Naive thymus-derived CD4-positive, alpha-beta T cell (primary cell): ENCODE measurements at regions of chr14 and their contacts with region 1.

Region 1: GRCh38 chr14:63867933-63868921 is 15.4 kb downstream of the SYNE2 start:
- DNase-seq: peak in 6 of 9 donors; percentile 15 to 44 (median 28)
- ATAC-seq: no peak
- H3K4me3 ChIP-seq: no peak overlapping the region
- H3K4me3 Mint-ChIP-seq: peak overlapping the region; percentile 46 to 84 (median 75)
- H3K27ac ChIP-seq: peak overlapping the region; percentile 36
- H3K27ac Mint-ChIP-seq: peak overlapping the region; percentile 84 to 98 (median 92)
- H3K4me1 ChIP-seq: peaks cover 36 to 60% of the 10 kb centered on the region in 2 donors
- H3K4me1 Mint-ChIP-seq: peaks cover 37 to 78% (median 64%) of the 10 kb centered on the region in 7 donors
- H3K27me3 ChIP-seq: no peaks in the 10 kb centered on the region
- H3K27me3 Mint-ChIP-seq: no peaks in the 10 kb centered on the region

Region 2: DNA sequence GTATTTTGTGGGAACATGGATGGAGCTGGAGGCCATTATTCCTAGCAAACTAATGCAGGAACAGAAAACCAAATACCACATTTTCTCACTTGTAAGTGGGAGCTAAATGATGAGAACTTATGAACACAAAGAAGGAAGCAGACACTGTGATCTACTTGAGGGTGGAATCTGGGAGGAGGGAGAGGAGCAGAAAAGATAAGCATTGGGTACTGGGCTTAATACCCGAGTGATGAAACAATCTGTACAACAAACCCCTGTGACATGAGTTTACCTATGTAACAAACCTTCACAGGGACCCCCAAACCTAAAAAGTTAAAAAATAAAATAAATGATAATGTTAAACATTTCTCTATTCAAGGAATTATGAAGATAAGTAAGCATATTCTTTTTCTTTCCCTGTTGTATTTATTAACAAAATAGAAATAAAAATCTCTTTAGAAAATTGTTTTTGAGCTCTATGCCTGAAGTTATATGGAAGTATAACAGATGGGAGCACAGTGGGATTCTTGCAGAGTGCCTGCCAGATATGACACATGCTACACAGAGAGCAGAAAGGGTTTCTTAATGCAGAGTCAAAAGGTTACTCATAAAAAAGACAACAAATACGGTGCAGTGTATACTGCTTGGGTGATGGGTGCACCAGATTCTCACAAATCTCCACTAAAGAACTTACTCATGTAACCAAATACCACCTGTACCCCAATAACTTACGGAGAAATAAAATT is 67.4 kb before region 1 on chr14:
- CTCF ChIA-PET with region 1: no interaction called
- POLR2A ChIA-PET with region 1: no interaction called
- intact Hi-C with region 1: no loop called
- DNase-seq: no peak
- ATAC-seq: no peak
- H3K4me3 ChIP-seq: no peak overlapping the region
- H3K4me3 Mint-ChIP-seq: no peak overlapping the region
- H3K27ac ChIP-seq: no peak overlapping the region
- H3K27ac Mint-ChIP-seq: peak overlapping the region in 1 of 9 donors; percentile 46
- H3K4me1 ChIP-seq: no peaks in the 10 kb centered on the region
- H3K4me1 Mint-ChIP-seq: peaks cover 3 to 12% (median 4%) of the 10 kb centered on the region in 7 donors
- H3K27me3 ChIP-seq: no peaks in the 10 kb centered on the region
- H3K27me3 Mint-ChIP-seq: peaks cover 0 to 17% (median 0%) of the 10 kb centered on the region in 5 donors

Region 3: DNA sequence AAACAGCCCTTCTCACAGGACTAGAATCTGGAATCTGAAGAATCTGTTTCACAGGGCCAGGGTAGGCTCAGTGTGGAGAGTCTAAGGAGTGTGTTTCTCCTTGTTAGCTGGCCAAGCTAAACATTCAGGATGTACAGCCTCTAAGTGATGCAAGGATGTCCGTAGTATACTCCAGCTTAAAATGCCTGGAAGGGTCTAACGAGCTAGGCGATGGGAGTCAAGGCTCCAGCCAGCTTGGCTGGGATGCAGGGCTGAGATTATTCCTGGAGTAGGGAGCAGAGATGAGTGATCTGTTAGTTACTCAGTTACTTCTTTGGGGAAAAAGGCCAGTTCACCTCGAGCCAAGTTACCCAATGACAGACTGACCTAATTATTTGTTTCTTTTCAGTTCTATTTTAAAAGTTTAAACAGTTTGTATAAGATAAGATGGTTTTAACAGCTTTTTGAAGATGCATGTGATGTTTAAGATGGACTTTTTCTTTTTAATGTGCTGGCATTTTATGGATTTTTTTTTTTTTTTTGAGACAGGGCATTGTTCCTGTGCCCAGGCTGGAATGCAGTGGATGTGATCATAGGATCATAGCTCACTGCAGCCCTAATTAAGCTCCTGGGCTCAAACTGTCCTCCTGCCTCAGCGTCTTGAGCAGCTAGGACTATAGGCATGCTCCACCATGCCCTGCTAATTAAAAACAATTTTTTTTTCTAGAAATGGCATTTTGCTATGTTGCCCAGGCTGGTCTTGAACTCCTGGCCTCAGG is 25.7 kb after region 1 on chr14:
- CTCF ChIA-PET with region 1: interaction called, 3 read pairs
- POLR2A ChIA-PET with region 1: no interaction called
- intact Hi-C with region 1: loop called in 1 of 2 experiments (anchors 1 kb)
- DNase-seq: no peak
- ATAC-seq: no peak
- H3K4me3 ChIP-seq: no peak overlapping the region
- H3K4me3 Mint-ChIP-seq: no peak overlapping the region
- H3K27ac ChIP-seq: no peak overlapping the region
- H3K27ac Mint-ChIP-seq: no peak overlapping the region
- H3K4me1 ChIP-seq: peaks cover 0 to 3% of the 10 kb centered on the region in 2 donors
- H3K4me1 Mint-ChIP-seq: peaks cover 9 to 31% (median 13%) of the 10 kb centered on the region in 7 donors
- H3K27me3 ChIP-seq: no peaks in the 10 kb centered on the region
- H3K27me3 Mint-ChIP-seq: peaks cover 0 to 3% (median 0%) of the 10 kb centered on the region in 5 donors